Posterior vena cava (tissue), 2 donors: ENCODE measurements at regions of chrX and their contacts with region 1.

Region 1: GRCh38 chrX:136176399-136176825 is 29.1 kb downstream of the FHL1 start:
- DNase-seq: no peak

Region 2: GRCh38 chrX:136191171-136191570 is 14.8 kb after region 1 on chrX:
- intact Hi-C with region 1: loop called in 1 of 2 experiments (anchors 1 kb)
- DNase-seq: no peak

Region 3: GRCh38 chrX:136658151-136658550 is 481.7 kb after region 1 on chrX:
- intact Hi-C with region 1: loop called in 1 of 2 experiments (anchors 5 kb)
- DNase-seq: no peak